HEK293T (cell line): ENCODE measurements at regions of chr1 and their contacts with region 1.

Region 1: GRCh38 chr1:31182352-31182751 is 57.3 kb downstream of the NKAIN1 start:
- DNase-seq: peak; percentile 87

Region 2: DNA sequence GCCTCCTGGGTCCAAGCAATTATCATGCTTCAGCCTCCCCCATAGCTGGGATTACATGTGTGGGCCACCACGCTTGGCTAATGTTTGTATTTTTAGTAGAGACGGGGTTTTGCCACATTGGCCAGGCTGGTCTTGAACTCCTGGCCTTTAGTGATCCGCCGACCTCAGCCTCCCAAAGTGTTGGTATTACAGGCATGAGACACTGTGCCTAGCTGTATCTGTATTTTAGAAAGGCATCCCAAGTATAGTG is 11.9 kb before region 1 on chr1:
- CTCF ChIA-PET with region 1: interaction called, 12 read pairs
- POLR2A ChIA-PET with region 1: interaction called, 3 read pairs
- DNase-seq: no peak

Region 3: DNA sequence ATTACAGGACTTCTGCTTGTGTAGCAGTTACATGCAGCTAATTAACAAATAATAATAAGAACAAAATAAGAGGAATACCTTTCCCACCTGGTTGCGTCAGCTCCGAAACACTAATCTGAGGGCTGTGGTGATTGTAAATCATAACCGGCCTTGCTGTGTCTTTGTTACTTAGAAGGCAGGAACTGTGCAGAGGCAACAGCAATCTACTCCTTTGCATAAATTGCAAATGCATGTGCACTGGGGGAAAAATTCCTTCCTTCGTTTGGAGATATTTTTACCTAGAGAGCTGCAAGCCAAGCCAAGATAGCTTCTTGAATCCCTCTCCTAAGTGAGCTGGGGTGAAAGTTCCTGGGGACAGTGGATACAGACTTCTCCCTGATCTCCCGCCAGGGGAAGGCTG is 11.4 kb after region 1 on chr1:
- CTCF ChIA-PET with region 1: interaction called, 15 read pairs
- POLR2A ChIA-PET with region 1: no interaction called
- DNase-seq: no peak